ENCODE measurements at regions of chr19 and their contacts with region 1.

Region 1: DNA sequence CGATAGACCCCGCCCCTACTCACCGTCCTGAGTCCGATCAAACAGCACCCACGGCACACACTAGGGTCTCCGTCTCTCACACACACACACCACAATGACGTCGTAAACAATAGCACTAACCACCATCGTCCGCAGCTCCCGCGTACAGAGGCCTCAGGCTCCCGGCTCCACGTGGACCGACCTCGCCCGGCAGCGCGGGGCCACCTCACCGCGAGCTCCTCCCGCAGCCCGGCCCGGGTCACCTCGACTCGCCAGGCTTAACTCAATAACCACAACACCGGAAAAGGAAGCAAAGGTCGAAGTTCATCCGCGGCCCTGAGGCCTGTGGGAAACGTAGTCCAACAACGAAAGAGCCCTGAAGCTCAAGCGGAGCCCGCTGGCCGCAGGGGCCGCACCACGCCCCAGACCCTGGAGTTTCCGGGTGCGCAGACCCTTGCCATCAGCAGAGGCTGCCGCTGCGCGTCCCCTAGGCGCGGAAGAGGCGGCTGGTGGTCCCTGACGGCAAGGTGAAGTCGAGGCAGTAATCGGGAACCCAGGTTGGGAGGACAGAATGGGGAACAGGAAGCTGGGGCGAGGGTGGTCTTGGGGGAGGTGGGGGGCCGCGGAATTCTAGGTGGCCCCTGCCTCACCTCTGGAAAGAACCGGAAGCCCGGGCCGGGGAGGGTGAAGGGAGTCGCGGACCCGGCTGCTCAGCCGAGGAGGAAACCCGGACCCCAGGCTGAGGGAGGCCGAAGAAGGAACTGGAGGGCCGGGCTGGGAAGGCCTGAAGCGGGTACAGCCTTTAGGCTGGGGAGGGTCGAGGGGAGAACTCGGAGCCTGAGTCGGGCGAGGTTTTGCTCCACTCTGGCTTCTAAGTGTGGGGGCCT is at the start of gene ZNF529:
- DNase-seq: peak; percentile 91
- ATAC-seq: peak; percentile 90
- H3K4me3 Mint-ChIP-seq: peak within 1 kb of the TSS; percentile 83
- H3K27ac Mint-ChIP-seq: peak within 1 kb of the TSS; percentile 93
- H3K4me1 Mint-ChIP-seq: peaks cover 27% of the 10 kb centered on the region
- H3K27me3 Mint-ChIP-seq: no peaks in the 10 kb centered on the region
- total RNA-seq, gene ZNF529: 12.5 to 19.2 TPM

Region 2: GRCh38 chr19:36132489-36132891 is 440.8 kb before region 1 on chr19:
- CTCF ChIA-PET with region 1: no interaction called
- POLR2A ChIA-PET with region 1: no interaction called
- intact Hi-C with region 1: loop called in 1 of 2 experiments (anchors 5 kb)
- DNase-seq: peak; percentile 74
- ATAC-seq: peak; percentile 77
- H3K4me3 Mint-ChIP-seq: no peak overlapping the region
- H3K27ac Mint-ChIP-seq: peak overlapping the region; percentile 80
- H3K4me1 Mint-ChIP-seq: peaks cover 33% of the 10 kb centered on the region
- H3K27me3 Mint-ChIP-seq: no peaks in the 10 kb centered on the region

Region 3: DNA sequence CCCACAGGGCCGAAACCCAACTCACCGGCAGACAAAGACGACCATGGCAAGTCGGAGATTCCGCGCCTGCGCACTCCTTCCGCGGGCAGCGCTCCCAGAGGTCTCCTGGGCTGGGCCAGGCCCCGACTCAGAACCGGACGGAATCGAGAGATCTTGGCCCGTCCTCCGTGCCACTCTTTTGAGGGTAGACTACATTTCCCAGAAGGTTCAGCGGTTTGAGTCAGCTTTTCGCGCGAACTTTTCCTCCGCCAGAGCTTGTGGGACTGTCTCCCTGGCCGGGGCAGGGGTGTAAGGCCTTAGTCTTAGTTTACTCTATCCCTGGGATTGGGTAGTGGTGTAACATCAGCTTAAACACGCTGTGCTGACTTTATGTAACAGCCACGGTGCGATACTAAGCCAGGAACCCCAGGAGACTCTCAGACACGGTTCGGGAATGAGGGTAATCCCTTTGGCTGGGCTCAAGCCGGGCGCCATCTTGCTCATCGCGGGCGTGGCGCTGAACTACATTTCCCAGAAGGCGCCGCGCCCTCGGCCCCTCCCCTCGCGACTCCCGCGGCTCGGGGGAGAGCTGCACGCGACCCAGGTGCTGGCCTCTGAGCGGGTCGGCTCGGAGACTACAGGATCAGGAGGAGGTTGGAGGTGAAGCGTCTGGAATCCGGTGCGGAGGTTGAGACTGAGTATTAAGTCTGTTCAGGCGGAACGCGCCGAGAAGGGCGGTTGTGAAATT is 44.9 kb before region 1 on chr19 and contains the start of gene ZNF260:
- CTCF ChIA-PET with region 1: no interaction called
- POLR2A ChIA-PET with region 1: interaction called, 5 read pairs
- intact Hi-C with region 1: loop called (anchors 1 to 2 kb)
- DNase-seq: peak; percentile 97
- ATAC-seq: peak; percentile 91
- H3K4me3 Mint-ChIP-seq: peak within 1 kb of the TSS; percentile 87
- H3K27ac Mint-ChIP-seq: peak within 1 kb of the TSS; percentile 96
- H3K4me1 Mint-ChIP-seq: peaks cover 14% of the 10 kb centered on the region
- H3K27me3 Mint-ChIP-seq: no peaks in the 10 kb centered on the region
- total RNA-seq, gene ZNF260: 5.7 to 8.2 TPM

Region 4: DNA sequence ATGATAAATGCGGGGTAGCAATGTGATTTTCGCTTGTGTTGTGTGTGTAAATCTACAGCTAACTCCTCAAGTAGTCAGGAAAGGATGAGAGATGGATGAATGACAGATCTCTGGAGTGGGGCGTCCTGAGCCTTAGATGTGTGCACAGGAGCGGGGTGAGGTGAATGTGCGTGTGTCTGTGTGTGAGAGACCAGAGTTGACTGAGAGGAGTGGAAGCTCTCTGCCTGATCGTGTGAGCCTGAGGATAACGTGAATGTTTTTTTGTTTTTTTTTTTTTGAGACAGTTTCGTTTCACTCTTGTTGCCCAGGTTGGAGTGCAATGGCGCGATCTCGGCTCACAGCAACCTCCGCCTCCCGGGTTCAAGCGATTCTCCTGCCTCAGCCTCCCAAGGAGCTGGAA is 92.6 kb after region 1 on chr19:
- CTCF ChIA-PET with region 1: no interaction called
- POLR2A ChIA-PET with region 1: no interaction called
- intact Hi-C with region 1: loop called in 1 of 2 experiments (anchors 1 kb)
- DNase-seq: no peak
- ATAC-seq: no peak
- H3K4me3 Mint-ChIP-seq: peak overlapping the region; percentile 98
- H3K27ac Mint-ChIP-seq: peak overlapping the region; percentile 99
- H3K4me1 Mint-ChIP-seq: peaks cover 26% of the 10 kb centered on the region
- H3K27me3 Mint-ChIP-seq: no peaks in the 10 kb centered on the region

Region 5: GRCh38 chr19:36796076-36796992 is 223.1 kb after region 1 on chr19:
- CTCF ChIA-PET with region 1: no interaction called
- POLR2A ChIA-PET with region 1: no interaction called
- intact Hi-C with region 1: loop called in 1 of 2 experiments (anchors 1 kb)
- DNase-seq: no peak
- ATAC-seq: no peak
- H3K4me3 Mint-ChIP-seq: peak overlapping the region; percentile 83
- H3K27ac Mint-ChIP-seq: peak overlapping the region; percentile 92
- H3K4me1 Mint-ChIP-seq: peaks cover 14% of the 10 kb centered on the region
- H3K27me3 Mint-ChIP-seq: peaks cover 4% of the 10 kb centered on the region

Region 6: DNA sequence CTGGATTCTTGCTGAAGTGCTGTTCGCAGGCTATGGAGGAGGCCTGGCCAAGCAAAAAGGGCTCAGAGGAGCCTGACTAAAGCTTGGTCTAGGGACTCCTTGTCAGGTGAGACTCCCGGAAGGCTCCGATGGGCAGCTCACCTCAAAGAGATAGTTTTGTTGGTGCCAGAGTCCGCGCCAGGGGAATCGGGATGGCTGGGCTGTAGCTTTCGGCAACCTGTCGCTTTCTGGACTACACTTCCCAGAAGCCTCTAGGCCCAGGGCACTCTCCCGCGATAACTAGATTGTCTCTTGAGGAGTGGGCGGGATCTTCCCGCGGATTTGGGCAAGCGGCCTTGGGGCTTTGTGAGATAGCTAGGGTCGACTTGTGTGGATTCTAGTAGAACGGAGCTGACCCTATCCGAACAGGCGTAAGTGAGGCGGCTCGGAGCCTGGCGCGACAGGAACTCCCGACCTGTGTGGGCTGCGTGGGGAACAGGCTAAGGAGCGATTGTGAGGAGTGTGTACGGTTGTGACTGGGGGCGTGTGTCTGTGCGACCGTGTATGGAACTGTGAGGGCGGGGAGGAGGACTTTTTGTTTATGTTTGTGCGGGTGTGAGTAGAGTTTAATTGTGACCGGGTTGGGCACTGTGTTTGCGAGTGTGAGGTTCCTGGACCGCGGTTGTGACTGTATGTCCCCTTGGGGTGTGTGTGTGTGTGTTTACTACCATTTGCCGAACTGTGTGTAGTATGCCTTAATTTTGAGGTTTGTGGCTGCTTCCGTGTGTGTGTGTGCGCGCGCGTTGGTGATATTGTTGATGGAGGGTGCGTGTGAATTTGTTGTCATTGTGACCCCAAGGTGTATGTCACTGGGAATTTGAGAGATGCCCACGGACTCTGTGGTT is 277.5 kb after region 1 on chr19 and contains the start of gene ZNF345:
- CTCF ChIA-PET with region 1: no interaction called
- POLR2A ChIA-PET with region 1: no interaction called
- intact Hi-C with region 1: loop called in 1 of 2 experiments (anchors 1 kb)
- DNase-seq: peak; percentile 91
- ATAC-seq: peak; percentile 82
- H3K4me3 Mint-ChIP-seq: no peak within 1 kb of the TSS
- H3K27ac Mint-ChIP-seq: no peak within 1 kb of the TSS
- H3K4me1 Mint-ChIP-seq: peaks cover 10% of the 10 kb centered on the region
- H3K27me3 Mint-ChIP-seq: no peaks in the 10 kb centered on the region
- total RNA-seq, gene ZNF345: 3.5 to 4.6 TPM

Measured in activated CD4-positive, alpha-beta T cell treated with anti-CD3 and anti-CD28 coated beads for 36 hours (primary cell).